Common myeloid progenitor, CD34-positive (primary cell): ENCODE measurements at regions of chr6 and their contacts with region 1.

Region 1: DNA sequence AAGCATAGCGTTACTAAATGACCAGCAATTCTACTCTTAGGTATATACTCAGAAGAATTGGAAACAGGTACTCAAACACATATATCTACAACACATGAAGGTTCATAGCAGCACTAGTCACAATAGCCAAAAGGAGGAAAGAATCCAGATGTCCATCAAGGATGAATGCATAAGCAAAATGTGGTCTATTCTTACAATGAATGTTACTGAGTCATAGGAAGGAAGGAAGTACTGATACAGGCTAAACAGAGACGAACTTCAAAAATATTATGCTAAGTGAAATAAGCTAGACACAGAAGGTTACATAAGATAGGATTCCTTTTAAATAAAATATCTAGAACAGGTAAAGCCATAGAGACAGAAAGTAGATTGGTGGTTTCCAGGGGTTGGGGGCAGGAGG is 93.5 kb downstream of the MAP3K7 start:
- DNase-seq: peak; percentile 43 to 89 (median 78)
- H3K4me3 ChIP-seq: peak overlapping the region in 1 of 7 experiments; percentile 1
- H3K27ac ChIP-seq: no peak overlapping the region
- H3K4me1 ChIP-seq: peaks cover 3 to 18% (median 13%) of the 10 kb centered on the region in 4 experiments
- H3K27me3 ChIP-seq: no peaks in the 10 kb centered on the region

Region 2: DNA sequence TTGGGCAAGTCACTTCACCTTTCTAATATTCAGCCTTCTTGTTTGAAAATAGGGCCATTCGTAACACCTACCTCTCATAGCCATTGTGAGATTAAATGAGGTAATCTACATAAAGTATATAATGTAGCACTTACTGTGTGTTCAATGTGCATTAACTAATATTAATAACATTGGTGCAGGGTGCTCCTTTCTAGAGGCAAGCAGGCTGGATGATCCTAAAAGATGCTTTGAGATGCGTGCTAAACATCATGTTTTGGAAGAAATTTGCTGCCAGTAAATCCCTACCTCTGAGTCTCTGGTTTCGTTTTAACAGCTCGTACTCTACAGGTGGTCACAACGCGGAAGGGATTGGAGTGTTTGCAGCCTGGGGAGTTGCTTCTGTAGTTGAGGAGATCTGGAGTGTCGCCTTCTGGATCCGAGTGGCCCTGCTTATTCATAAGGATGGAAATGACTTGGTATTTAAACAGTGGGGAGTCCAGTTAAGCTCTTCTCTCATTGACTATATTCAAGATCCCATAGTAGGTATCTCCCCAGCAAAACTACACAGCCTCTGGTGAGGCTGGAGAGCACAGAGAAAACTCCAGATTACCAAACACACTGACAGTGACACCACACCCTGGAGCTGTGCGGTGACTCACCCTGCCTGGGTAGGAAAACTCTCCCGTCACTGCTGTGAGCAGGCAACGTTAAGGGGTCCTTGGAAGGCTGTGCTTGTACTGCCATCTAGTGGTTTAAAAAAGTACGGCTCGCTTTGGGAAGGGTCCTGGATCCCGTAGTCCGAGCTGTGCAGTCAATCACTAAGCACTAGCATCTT is 14.3 kb before region 1 on chr6:
- CTCF ChIA-PET with region 1: interaction called, 33 read pairs
- POLR2A ChIA-PET with region 1: no interaction called
- DNase-seq: peak; percentile 90 to 95 (median 94)
- H3K4me3 ChIP-seq: no peak overlapping the region
- H3K27ac ChIP-seq: no peak overlapping the region
- H3K4me1 ChIP-seq: peaks cover 0 to 7% (median 4%) of the 10 kb centered on the region in 4 experiments
- H3K27me3 ChIP-seq: no peaks in the 10 kb centered on the region